ENCODE measurements at regions of chr9 and their contacts with region 1.

Region 1: DNA sequence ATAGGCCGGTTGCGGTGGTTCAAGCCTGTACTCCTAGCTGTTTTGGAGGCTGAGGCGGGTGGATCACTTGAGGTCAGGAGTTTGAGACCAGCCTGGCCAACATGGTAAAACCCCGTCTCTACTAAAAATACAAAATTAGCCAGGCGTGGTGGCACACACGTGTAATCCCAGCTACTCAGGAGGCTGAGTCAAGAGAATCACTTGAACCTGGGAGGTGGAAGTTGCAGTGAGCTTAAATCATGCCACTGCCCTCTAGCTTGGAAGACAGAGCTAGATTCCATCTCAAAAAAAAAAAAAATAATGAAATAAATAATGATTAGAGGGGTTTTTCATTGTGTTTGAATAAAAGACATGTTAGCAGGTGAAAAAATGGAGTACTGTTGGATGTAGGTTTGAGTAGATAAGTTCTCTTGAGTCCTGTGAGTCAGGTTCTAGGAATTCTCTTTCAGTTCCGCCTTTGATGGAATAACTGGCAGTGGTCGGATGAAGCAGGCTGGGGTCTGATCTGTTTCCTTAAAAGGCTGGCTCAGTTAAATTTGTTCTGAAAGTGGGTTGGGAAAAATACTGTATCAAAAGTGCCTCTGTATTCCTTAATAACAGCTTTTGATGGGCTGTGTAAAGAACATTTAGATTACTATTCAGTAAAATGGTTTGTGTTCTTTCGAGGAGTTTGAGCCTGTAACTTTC is 73.2 kb downstream of the AOPEP start:
- DNase-seq: no peak
- ATAC-seq: no peak
- H3K4me3 ChIP-seq: no peak overlapping the region
- H3K27ac ChIP-seq: peak overlapping the region; percentile 68
- H3K4me1 ChIP-seq: peaks cover 34% of the 10 kb centered on the region
- H3K27me3 ChIP-seq: no peaks in the 10 kb centered on the region
- CTCF ChIP-seq: no peak

Region 2: GRCh38 chr9:94772639-94773303 is 26.9 kb before region 1 on chr9:
- CTCF ChIA-PET with region 1: interaction called, 15 read pairs
- POLR2A ChIA-PET with region 1: no interaction called
- in situ Hi-C with region 1: no loop called
- intact Hi-C with region 1: no loop called
- DNase-seq: no peak
- ATAC-seq: no peak
- H3K4me3 ChIP-seq: no peak overlapping the region
- H3K27ac ChIP-seq: no peak overlapping the region
- H3K4me1 ChIP-seq: no peaks in the 10 kb centered on the region
- H3K27me3 ChIP-seq: no peaks in the 10 kb centered on the region
- CTCF ChIP-seq: no peak

Region 3: GRCh38 chr9:95653246-95653645 is 853.5 kb after region 1 on chr9:
- CTCF ChIA-PET with region 1: no interaction called
- POLR2A ChIA-PET with region 1: no interaction called
- in situ Hi-C with region 1: no loop called
- intact Hi-C with region 1: no loop called
- DNase-seq: no peak
- ATAC-seq: no peak
- H3K4me3 ChIP-seq: no peak overlapping the region
- H3K27ac ChIP-seq: no peak overlapping the region
- H3K4me1 ChIP-seq: no peaks in the 10 kb centered on the region
- H3K27me3 ChIP-seq: no peaks in the 10 kb centered on the region
- CTCF ChIP-seq: no peak

Measured in Panc1 (cell line).